ENCODE measurements at regions of chr9 and their contacts with region 1.

Region 1: DNA sequence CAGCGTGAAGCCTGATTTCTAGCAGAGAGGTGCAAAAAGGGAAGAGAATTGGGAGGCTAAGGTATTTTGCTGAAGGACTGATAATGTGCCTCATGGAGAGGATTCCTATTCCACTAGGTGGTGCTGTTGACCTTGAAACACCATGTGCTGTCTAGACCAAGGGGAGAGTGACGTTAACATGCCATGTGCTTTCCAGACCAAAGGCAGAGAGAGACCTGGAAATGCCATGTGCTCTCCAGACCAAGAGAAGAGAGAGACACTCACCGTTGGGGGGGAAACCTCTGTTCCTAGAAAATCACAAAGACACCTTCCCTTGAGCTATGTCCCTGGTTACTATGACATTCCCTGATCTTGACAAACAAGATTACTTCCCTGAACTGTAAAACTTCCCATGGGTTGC is 286.0 kb upstream of the TUSC1 start:
- DNase-seq: peak; percentile 25
- ATAC-seq: no peak
- H3K4me3 Mint-ChIP-seq: no peak overlapping the region
- H3K27ac Mint-ChIP-seq: no peak overlapping the region
- H3K4me1 Mint-ChIP-seq: no peaks in the 10 kb centered on the region
- H3K27me3 Mint-ChIP-seq: no peaks in the 10 kb centered on the region

Region 2: GRCh38 chr9:26086396-26086795 is 122.2 kb after region 1 on chr9:
- CTCF ChIA-PET with region 1: no interaction called
- POLR2A ChIA-PET with region 1: no interaction called
- intact Hi-C with region 1: no loop called
- DNase-seq: no peak
- ATAC-seq: no peak
- H3K4me3 Mint-ChIP-seq: no peak overlapping the region
- H3K27ac Mint-ChIP-seq: no peak overlapping the region
- H3K4me1 Mint-ChIP-seq: no peaks in the 10 kb centered on the region
- H3K27me3 Mint-ChIP-seq: no peaks in the 10 kb centered on the region

Region 3: GRCh38 chr9:26326473-26327044 is 362.3 kb after region 1 on chr9:
- CTCF ChIA-PET with region 1: no interaction called
- POLR2A ChIA-PET with region 1: no interaction called
- intact Hi-C with region 1: loop called (anchors 1 to 5 kb)
- DNase-seq: peak; percentile 24
- ATAC-seq: no peak
- H3K4me3 Mint-ChIP-seq: no peak overlapping the region
- H3K27ac Mint-ChIP-seq: no peak overlapping the region
- H3K4me1 Mint-ChIP-seq: no peaks in the 10 kb centered on the region
- H3K27me3 Mint-ChIP-seq: no peaks in the 10 kb centered on the region

Region 4: DNA sequence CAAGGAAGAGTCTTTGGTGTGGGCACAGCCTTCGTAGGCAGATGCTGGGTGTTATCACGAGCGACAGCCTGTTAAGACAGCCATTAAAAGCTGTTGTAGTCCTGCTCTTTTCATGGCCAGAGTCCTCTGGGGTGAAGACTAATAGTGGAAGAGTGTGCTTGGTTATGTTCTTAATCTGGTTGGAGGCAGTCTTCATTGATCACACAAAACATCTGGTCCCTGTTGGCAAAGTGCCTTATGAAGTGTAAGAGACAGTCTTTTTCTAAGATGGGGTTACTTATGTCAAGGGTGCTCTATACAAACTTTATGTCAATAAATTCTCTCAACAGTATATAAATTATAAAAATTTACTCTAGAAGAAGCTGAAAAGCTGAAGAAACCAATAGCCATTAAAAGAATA is 648.0 kb after region 1 on chr9:
- CTCF ChIA-PET with region 1: no interaction called
- POLR2A ChIA-PET with region 1: no interaction called
- intact Hi-C with region 1: loop called in 1 of 2 experiments (anchors 2 kb)
- DNase-seq: no peak
- ATAC-seq: no peak
- H3K4me3 Mint-ChIP-seq: no peak overlapping the region
- H3K27ac Mint-ChIP-seq: no peak overlapping the region
- H3K4me1 Mint-ChIP-seq: no peaks in the 10 kb centered on the region
- H3K27me3 Mint-ChIP-seq: no peaks in the 10 kb centered on the region

Region 5: GRCh38 chr9:26656003-26656870 is 692.0 kb after region 1 on chr9:
- CTCF ChIA-PET with region 1: no interaction called
- POLR2A ChIA-PET with region 1: no interaction called
- intact Hi-C with region 1: loop called in 1 of 2 experiments (anchors 10 kb)
- DNase-seq: peak; percentile 11
- ATAC-seq: no peak
- H3K4me3 Mint-ChIP-seq: no peak overlapping the region
- H3K27ac Mint-ChIP-seq: no peak overlapping the region
- H3K4me1 Mint-ChIP-seq: no peaks in the 10 kb centered on the region
- H3K27me3 Mint-ChIP-seq: no peaks in the 10 kb centered on the region

Measured in activated CD4-positive, alpha-beta T cell treated with anti-CD3 and anti-CD28 coated beads for 36 hours (primary cell).